ENCODE measurements at regions of chr7 and their contacts with region 1.

Region 1: DNA sequence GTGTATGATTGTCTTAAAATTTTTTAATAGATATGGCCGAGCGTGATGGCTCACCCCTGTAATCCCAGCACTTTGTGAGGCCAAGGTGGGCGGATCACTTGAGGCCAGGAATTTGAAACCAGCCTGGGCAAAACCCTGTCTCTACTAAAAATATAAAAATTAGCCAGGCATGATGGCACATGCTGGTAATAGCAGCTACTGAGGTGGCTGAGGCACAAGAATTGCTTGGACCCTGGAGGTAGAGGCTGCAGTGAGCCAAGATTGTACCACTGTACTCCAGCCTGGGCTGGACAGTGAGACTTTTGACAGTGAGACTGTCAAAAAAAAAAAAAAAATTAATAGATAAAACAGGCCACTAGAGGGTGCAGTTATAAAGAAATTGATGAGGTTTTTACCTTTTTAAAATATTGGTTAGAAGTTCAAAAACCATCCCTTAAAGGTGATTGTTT is 20.5 kb downstream of the NOM1 start:
- DNase-seq: peak in 2 of 3 donors; percentile 16 to 26
- H3K4me3 ChIP-seq: no peak overlapping the region
- H3K27ac ChIP-seq: no peak overlapping the region
- H3K4me1 ChIP-seq: no peaks in the 10 kb centered on the region
- H3K27me3 ChIP-seq: no peaks in the 10 kb centered on the region

Region 2: DNA sequence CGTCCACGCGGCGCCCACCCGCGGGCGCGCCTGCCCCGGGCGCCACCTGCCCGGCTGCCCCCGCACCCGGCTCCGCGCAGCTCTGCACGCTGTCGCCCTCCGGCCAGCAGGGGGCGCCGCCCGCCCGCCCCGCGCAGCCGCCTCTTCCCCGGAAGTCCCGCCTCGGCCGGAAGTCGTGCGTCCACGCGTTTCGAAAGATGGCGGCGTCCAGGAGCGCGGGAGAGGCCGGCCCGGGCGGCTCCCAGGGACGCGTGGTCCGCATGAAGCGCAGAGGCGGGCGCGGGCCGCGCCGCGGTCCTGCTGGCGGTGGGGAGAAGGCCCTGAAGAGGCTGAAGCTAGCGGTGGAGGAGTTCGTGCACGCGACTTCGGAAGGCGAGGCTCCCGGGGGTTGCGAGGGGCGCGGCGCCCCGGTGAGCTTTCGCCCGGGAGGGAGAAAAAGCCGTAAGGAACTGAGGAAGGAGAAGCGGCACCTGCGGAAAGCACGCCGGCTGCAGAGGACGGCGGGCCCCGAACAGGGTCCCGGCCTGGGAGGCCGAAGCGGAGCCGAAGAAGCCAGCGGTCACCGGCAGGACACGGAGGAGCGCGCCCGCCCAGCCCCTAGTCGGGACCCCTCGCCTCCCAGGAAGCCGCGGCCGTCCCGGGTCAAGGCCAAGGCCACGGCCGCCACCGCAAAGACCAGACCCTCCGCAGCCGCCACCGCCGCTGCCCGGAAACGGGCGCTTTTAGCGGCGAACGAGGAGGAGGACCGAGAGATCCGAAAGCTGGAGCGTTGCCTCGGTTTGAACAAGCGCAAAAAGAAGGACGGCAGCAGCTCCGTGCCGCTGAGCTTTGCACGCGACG is 20.2 kb before region 1 on chr7 and contains the start of gene NOM1:
- CTCF ChIA-PET with region 1: interaction called, 11 read pairs
- POLR2A ChIA-PET with region 1: no interaction called
- DNase-seq: peak; percentile 83 to 90 (median 89)
- H3K4me3 ChIP-seq: peak within 1 kb of the TSS; percentile 84 to 93 (median 87)
- H3K27ac ChIP-seq: peak within 1 kb of the TSS in 1 of 2 experiments; percentile 61
- H3K4me1 ChIP-seq: peaks cover 12 to 20% (median 19%) of the 10 kb centered on the region in 4 experiments
- H3K27me3 ChIP-seq: peaks cover under 1 to 24% (median 5%) of the 10 kb centered on the region in 5 experiments

Region 3: GRCh38 chr7:157224627-157225026 is 254.6 kb after region 1 on chr7:
- CTCF ChIA-PET with region 1: interaction called, 15 read pairs
- POLR2A ChIA-PET with region 1: no interaction called
- DNase-seq: peak; percentile 43 to 81 (median 65)
- H3K4me3 ChIP-seq: no peak overlapping the region
- H3K27ac ChIP-seq: no peak overlapping the region
- H3K4me1 ChIP-seq: no peaks in the 10 kb centered on the region
- H3K27me3 ChIP-seq: no peaks in the 10 kb centered on the region

Region 4: DNA sequence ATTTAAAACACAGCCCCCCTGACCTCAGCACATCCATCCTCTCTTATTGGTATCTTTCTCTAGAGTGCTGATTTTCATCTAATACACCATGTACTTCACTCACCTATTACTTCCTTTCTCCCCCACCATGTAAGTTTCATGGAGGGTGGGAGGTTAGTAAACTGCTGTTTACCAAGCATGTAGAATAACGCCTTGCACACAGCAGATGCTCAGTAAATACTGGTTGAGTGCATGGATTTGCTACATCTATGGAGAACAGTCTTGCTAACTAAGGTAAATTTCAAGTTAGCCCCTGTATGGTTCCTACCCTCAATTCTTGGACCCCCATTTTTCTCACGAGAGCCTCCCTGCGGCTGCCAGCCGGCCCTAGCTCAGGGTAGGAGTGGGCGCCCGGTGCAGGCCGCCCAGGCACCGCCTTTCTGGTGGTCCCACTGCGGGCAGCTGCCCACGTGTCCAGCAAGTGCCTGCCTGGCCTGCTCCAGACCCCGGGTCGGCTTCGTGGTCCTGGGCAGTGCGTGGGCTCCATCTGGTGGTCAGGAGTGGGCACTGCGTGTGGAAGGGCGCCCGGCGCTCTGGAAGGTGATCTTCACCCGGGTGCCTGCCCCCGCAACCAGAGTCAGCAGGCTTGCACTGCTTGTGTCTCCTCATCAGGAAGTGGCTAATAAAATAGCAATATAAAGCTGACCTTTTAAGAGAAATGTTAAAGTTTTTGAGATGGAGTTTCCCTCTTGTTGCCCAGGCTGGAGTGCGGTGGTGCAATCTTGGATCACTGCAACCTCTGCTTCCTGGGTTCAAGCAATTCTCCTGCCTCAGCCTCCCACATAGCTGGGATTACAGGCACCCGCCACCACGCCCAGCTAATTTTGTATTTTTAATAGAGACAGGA is 303.5 kb after region 1 on chr7:
- CTCF ChIA-PET with region 1: interaction called, 14 read pairs
- POLR2A ChIA-PET with region 1: no interaction called
- DNase-seq: peak; percentile 71 to 83 (median 82)
- H3K4me3 ChIP-seq: peak overlapping the region in 1 of 7 experiments; percentile 16
- H3K27ac ChIP-seq: no peak overlapping the region
- H3K4me1 ChIP-seq: peaks cover 0 to 46% (median 32%) of the 10 kb centered on the region in 4 experiments
- H3K27me3 ChIP-seq: no peaks in the 10 kb centered on the region